ENCODE measurements at regions of chr14 and their contacts with region 1.

Region 1: DNA sequence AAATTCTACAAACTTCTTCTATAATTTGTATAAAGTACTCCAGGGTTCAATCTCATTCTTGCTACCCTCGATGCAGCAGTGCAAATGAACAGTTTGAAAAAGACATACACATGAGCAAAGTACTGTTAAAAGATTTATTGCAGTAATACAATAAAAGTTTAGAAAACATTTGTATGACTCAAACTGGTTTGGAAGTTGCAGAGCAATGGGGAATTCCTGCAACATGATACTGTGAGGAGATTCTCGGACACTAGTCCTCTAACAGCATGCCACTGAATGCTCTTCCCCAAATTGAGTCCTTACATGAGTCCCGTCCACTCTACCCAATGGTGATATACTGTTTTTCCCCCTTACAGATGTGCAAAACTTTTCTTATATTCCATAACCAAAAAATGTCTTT is 45.4 kb downstream of the ATG14 start:
- DNase-seq: no peak
- H3K4me3 ChIP-seq: no peak overlapping the region
- H3K27ac ChIP-seq: no peak overlapping the region
- H3K4me1 ChIP-seq: no peaks in the 10 kb centered on the region
- H3K27me3 ChIP-seq: no peaks in the 10 kb centered on the region
- CTCF ChIP-seq: no peak
- EP300 ChIP-seq: no peak
- POLR2A ChIP-seq: no peak
- RAD21 ChIP-seq: no peak

Region 2: DNA sequence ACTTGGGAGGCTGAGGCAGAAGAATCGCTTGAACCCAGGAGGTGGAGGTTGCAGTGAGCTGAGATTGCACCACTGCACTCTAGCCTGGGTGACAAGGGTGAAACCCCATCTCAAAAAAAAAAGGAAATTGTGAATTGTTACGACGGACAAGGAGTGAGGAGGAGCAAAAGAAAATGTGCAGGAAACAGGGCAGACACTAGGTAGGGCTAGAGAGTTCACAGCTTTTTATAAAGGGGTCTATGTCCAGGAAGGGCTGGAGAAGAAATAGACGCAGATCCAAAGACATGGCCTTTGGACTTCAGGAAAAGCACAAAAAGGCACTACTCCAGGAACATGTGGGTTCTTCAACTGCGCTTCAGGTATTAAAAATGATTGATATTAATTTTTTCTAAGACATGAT is 11.0 kb after region 1 on chr14:
- CTCF ChIA-PET with region 1: interaction called, 14 read pairs
- POLR2A ChIA-PET with region 1: interaction called, 3 read pairs
- DNase-seq: no peak
- H3K4me3 ChIP-seq: no peak overlapping the region
- H3K27ac ChIP-seq: no peak overlapping the region
- H3K4me1 ChIP-seq: no peaks in the 10 kb centered on the region
- H3K27me3 ChIP-seq: no peaks in the 10 kb centered on the region
- CTCF ChIP-seq: peak in 2 of 3 experiments; percentile 8 to 40; a peak in 2 of 4 replicates
- EP300 ChIP-seq: no peak
- POLR2A ChIP-seq: no peak
- RAD21 ChIP-seq: peak; percentile 6 to 17; a peak in 1 of 4 replicates